K562 (cell line): ENCODE measurements at regions of chrX and their contacts with region 1.

Region 1: GRCh38 chrX:66163849-66164411 is at the start of gene HEPH:
- DNase-seq: peak; percentile 54 to 79 (median 68)
- ATAC-seq: peak; percentile 76
- H3K4me3 ChIP-seq: peak within 1 kb of the TSS; percentile 66
- H3K27ac ChIP-seq: peak within 1 kb of the TSS; percentile 89
- H3K4me1 ChIP-seq: peaks cover 0 to 20% of the 10 kb centered on the region in 2 experiments; a peak in 2 of 5 replicates
- H3K27me3 ChIP-seq: no peaks in the 10 kb centered on the region
- CTCF ChIP-seq: no peak
- EP300 ChIP-seq: peak; percentile 45
- POLR2A ChIP-seq: peak; percentile 72
- RAD21 ChIP-seq: no peak
- polyA plus RNA-seq, gene HEPH: 22.4 to 46.9 TPM

Region 2: DNA sequence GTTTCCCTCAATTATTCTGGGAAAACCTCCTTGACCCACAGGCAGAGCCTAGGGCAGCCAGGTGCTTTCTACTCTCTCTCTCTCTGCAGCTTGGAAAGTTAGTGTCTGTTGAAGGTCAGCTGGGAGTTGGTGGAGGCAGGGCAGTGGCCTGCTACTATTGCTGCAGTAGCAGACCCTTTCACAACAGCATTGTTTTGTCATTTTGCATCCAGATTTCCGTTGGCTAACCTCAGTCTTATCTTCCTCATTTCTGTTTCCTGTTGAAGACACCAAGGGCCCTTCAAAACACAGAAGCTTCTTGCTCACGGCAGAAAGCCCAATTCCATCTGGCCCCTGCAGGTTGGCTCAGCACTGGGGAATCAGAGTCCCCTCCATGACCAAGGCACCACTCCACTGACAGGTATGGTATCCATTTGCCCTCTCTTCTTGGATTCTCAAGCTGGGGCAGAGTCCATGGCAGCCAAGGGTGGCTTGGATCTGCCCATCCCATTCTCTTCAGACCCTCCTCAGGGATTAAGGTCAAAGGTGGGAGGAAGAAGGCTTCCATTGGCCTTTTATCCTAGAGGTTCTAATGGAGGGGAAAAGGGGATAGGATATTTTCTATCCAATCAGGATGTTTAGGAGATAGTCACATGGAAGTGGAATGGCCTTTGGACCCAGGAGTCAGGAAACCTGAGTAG is 148.6 kb before region 1 on chrX:
- CTCF ChIA-PET with region 1: no interaction called
- POLR2A ChIA-PET with region 1: interaction called, 5 read pairs
- in situ Hi-C with region 1: no loop called
- intact Hi-C with region 1: loop called (anchors 5 kb)
- DNase-seq: peak; percentile 35 to 88 (median 60)
- ATAC-seq: peak; percentile 68
- H3K4me3 ChIP-seq: peak overlapping the region; percentile 55
- H3K27ac ChIP-seq: peak overlapping the region; percentile 96
- H3K4me1 ChIP-seq: peaks cover 16 to 72% of the 10 kb centered on the region in 2 experiments
- H3K27me3 ChIP-seq: no peaks in the 10 kb centered on the region
- CTCF ChIP-seq: no peak
- EP300 ChIP-seq: peak; percentile 96
- POLR2A ChIP-seq: peak; percentile 88
- RAD21 ChIP-seq: peak in 1 of 2 experiments; percentile 32; a peak in 2 of 4 replicates

Region 3: DNA sequence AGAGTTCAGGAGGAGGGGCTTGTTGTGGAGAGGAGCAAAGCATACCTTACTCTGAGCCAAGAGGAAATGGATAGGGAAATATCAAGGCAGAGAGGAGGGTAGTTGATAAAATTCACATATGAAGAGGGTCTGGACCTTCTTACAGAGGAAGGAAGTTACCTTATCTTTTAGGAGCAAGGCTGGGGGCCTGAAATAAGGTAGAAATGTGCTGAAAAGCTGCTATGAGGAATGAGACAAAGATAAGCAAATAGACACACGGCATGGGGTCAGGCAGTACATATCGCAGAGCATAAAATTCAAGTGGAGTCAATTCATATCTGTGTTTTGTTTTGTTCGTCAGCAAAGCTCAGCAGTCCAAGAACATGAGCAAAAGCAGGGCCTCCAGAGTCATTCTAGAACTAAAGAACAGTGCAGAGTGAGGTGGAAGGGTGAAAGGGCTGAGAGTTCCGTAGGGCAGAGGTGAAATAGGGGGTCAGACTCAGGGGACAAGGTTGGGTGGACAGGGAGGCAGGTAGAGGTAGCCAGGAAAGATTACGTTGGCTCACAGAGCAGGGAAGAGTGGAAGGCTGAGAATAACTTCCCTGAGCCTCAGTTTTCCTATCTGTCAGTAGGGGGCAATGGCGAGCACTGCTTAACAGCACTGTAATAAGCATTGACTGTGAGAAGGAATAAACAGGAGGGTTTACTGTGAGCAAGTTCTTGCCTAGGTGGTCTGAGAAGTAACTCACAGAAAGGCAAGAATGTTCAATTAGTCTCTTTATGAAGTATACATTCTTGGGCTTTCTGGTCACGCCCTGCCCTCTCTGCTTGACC is 133.2 kb before region 1 on chrX:
- CTCF ChIA-PET with region 1: no interaction called
- POLR2A ChIA-PET with region 1: no interaction called
- in situ Hi-C with region 1: no loop called
- intact Hi-C with region 1: loop called (anchors 5 kb)
- DNase-seq: peak; percentile 38 to 82 (median 51)
- ATAC-seq: peak; percentile 91
- H3K4me3 ChIP-seq: peak overlapping the region; percentile 15; the same call in 1 of the 2 replicates
- H3K27ac ChIP-seq: peak overlapping the region; percentile 90
- H3K4me1 ChIP-seq: peaks cover 5 to 40% of the 10 kb centered on the region in 2 experiments
- H3K27me3 ChIP-seq: no peaks in the 10 kb centered on the region
- CTCF ChIP-seq: peak; percentile 71 to 79 (median 75)
- EP300 ChIP-seq: peak; percentile 82; the same call in 1 of the 2 replicates
- POLR2A ChIP-seq: no peak
- RAD21 ChIP-seq: peak; percentile 44 to 64

Region 4: DNA sequence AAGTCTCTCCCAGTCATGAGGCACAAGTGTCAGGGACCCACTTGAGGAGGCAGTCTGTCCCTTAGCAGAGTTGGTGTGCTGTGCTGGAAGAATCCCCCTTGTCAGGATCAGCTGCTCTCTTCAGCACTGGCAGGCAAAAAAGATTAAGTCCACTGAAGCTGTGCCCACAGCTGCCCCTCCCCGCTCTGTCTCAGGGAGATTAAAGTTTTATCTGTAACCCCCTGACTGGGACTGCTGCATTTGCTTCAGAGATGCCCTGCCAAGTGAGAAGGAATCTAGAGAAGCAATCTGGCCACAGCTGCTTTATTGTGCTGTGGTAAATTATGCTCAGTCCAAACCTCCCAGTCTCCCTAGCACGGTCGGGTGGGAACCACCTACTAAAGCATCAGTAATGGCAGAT is 37.3 kb before region 1 on chrX:
- CTCF ChIA-PET with region 1: no interaction called
- POLR2A ChIA-PET with region 1: no interaction called
- in situ Hi-C with region 1: no loop called
- intact Hi-C with region 1: loop called (anchors 5 kb)
- DNase-seq: peak in 1 of 4 experiments; percentile 29
- ATAC-seq: peak; percentile 47
- H3K4me3 ChIP-seq: no peak overlapping the region
- H3K27ac ChIP-seq: no peak overlapping the region
- H3K4me1 ChIP-seq: no peaks in the 10 kb centered on the region; a peak in 2 of 5 replicates
- H3K27me3 ChIP-seq: no peaks in the 10 kb centered on the region
- CTCF ChIP-seq: no peak
- EP300 ChIP-seq: no peak
- POLR2A ChIP-seq: no peak
- RAD21 ChIP-seq: no peak